ENCODE measurements at regions of chr4 and their contacts with region 1.

Region 1: DNA sequence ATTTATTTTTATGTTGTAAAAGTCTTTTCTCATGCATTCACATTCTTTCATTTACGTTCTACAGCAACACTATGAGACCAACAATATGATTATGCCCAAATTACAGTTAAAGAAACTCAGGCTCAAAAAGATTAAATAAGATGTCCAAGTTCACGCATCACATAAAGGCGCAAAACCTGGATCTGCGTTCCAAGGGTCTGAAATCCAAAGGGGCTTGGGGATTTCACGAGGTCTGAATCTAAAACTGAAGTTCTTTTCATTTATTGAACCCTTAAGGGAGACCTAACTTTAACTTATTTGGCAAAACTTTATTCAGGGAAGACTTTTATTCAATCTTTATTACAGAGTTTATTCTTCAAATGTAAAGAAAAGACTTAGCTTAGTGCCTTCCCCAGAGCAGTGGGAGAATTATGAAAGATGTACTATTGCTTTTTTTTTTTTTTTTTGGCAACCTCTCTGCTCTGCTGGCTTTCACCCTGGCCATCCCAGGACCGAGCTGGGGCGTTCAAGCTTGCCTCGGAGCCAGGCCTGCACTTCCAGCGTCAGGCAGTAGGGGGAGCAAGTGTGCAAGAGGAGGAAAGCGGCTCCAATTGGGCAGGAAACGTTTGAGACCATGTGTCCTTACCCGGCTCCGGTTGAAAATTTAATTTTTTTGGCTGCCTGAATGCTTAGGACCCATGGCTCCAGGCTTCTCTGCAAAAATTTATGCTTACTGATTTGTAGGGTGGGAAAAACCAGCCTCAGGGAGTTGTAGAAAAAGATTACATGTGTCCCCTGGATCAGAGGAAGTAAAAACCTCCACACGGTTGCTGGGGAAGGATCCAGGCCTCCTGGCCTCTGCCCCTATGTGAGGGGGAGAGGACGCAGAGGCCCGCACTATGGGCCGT is 344.3 kb upstream of the KLF3 start:
- DNase-seq: peak; percentile 97
- H3K4me3 ChIP-seq: peak overlapping the region in 6 of 8 donors; percentile 32 to 67 (median 36)
- H3K27ac ChIP-seq: peak overlapping the region; percentile 79 to 95 (median 92)
- H3K4me1 ChIP-seq: peaks cover 18 to 39% (median 23%) of the 10 kb centered on the region in 6 donors
- H3K27me3 ChIP-seq: no peaks in the 10 kb centered on the region
- CTCF ChIP-seq: peak; percentile 97 to 99 (median 99)
- POLR2A ChIP-seq: no peak

Region 2: GRCh38 chr4:38174801-38175200 is 144.9 kb before region 1 on chr4:
- intact Hi-C with region 1: no loop called
- DNase-seq: no peak
- H3K4me3 ChIP-seq: no peak overlapping the region
- H3K27ac ChIP-seq: peak overlapping the region in 4 of 8 donors; percentile 61 to 78 (median 67)
- H3K4me1 ChIP-seq: peaks cover 9 to 52% (median 29%) of the 10 kb centered on the region in 6 donors
- H3K27me3 ChIP-seq: no peaks in the 10 kb centered on the region
- CTCF ChIP-seq: no peak
- POLR2A ChIP-seq: no peak

Region 3: GRCh38 chr4:38213083-38213805 is 106.5 kb before region 1 on chr4:
- intact Hi-C with region 1: no loop called
- DNase-seq: no peak
- H3K4me3 ChIP-seq: no peak overlapping the region
- H3K27ac ChIP-seq: peak overlapping the region in 2 of 8 donors; percentile 10 to 21
- H3K4me1 ChIP-seq: peaks cover 0 to 11% (median 5%) of the 10 kb centered on the region in 6 donors
- H3K27me3 ChIP-seq: no peaks in the 10 kb centered on the region
- CTCF ChIP-seq: no peak
- POLR2A ChIP-seq: no peak

Region 4: GRCh38 chr4:38675146-38676121 is 355.7 kb after region 1 on chr4:
- intact Hi-C with region 1: loop called (anchors 5 kb)
- DNase-seq: no peak
- H3K4me3 ChIP-seq: peak overlapping the region in 2 of 8 donors; percentile 12 to 21
- H3K27ac ChIP-seq: peak overlapping the region; percentile 43 to 100 (median 99)
- H3K4me1 ChIP-seq: peaks cover 63 to 100% (median 86%) of the 10 kb centered on the region in 6 donors
- H3K27me3 ChIP-seq: no peaks in the 10 kb centered on the region
- CTCF ChIP-seq: peak; percentile 78 to 92 (median 89)
- POLR2A ChIP-seq: no peak

Region 5: DNA sequence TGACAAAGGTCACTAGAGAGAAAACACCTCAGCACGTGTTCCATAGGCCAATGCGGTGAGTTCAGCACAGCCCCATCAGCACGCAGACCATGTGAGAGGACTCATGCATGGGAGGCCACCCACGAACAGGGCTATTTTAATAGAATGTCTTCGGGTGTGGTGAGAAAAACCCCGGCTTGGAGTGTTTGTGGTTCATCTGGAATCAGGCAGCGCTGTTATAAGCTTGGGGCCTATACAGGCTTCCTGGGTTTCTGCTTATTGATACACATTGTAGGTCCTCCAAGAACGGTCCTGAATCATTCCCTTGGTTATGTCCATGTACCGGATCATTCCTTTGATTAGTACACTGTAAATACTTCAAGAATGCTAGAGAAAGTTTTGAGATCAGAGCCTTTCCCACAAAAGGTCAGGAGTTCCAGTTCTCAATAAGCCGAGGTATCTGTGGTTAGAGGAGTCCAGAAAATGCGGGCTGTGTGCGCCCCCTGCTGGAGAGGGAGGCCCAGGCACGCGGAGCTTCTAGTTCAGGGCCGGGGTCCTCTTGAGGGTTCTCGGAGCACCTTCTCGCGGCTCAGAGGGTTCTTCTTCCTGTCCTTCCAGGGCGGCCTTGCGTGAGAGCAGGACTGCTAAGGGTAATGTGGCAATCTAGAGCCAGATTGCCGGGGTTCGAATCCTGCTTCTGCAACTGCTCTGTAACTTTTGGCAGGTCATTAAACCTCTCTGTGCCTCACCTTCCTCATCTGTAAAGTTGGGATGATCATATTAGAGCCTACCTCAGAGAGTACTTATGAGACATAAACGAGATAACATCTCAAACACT is 411.3 kb after region 1 on chr4:
- intact Hi-C with region 1: loop called (anchors 10 kb)
- DNase-seq: peak; percentile 95
- H3K4me3 ChIP-seq: no peak overlapping the region
- H3K27ac ChIP-seq: peak overlapping the region in 3 of 8 donors; percentile 1 to 22 (median 2)
- H3K4me1 ChIP-seq: peaks cover 9 to 29% (median 12%) of the 10 kb centered on the region in 6 donors
- H3K27me3 ChIP-seq: no peaks in the 10 kb centered on the region
- CTCF ChIP-seq: peak; percentile 84 to 99 (median 93)
- POLR2A ChIP-seq: no peak